IMR-90 (cell line): ENCODE measurements at regions of chr11 and their contacts with region 1.

Region 1: DNA sequence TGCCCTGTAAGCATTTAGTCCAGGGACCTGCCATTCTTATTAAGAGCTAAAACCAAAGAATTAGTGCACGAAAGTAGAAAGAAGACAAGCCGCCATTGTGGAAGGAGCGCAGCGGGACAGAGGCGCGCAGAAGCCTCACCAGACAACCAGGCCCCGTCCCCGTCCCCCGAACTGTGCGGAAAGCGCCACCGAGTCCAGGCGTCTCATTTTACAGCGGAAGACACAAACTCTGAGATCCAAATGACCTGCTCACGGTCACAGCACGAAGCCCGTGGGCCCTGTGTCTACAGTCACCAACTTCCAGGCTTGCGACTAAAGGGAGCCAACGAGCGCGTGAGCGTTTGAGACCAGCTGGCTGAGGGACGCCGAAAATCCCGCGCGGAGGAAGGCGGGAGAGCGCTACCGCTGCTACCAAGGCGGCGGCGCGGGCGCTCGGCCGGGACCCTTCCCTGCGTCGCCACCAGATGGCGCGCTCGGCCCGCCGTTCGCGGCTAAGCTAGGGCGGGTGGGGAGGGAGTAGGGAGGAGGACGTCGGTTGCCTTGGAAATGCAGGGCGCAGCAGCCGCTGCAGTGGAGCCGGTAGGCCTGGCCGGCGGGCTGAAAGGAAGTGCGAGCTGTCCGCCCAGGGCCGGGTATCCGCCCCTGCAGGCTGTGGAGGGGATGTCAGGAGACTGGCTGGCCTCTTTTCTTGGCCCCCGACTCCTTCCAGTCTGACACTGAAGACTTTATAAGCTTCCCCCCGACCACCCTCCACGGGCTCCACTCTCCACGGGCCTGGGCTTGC is 434 bp upstream of the CCDC83 start:
- DNase-seq: peak; percentile 90
- ATAC-seq: peak; percentile 99
- H3K4me3 ChIP-seq: peak overlapping the region; percentile 90
- H3K27ac ChIP-seq: peak overlapping the region; percentile 98
- H3K4me1 ChIP-seq: peaks cover 7% of the 10 kb centered on the region
- H3K27me3 ChIP-seq: no peaks in the 10 kb centered on the region
- CTCF ChIP-seq: peak; percentile 82
- POLR2A ChIP-seq: peak; percentile 69
- RAD21 ChIP-seq: peak; percentile 93

Region 2: GRCh38 chr11:85385547-85385946 is 469.2 kb before region 1 on chr11:
- CTCF ChIA-PET with region 1: no interaction called
- POLR2A ChIA-PET with region 1: no interaction called
- dilution Hi-C with region 1: no loop called
- in situ Hi-C with region 1: no loop called
- intact Hi-C with region 1: no loop called
- DNase-seq: no peak
- ATAC-seq: no peak
- H3K4me3 ChIP-seq: no peak overlapping the region
- H3K27ac ChIP-seq: no peak overlapping the region
- H3K4me1 ChIP-seq: no peaks in the 10 kb centered on the region
- H3K27me3 ChIP-seq: no peaks in the 10 kb centered on the region
- CTCF ChIP-seq: no peak
- POLR2A ChIP-seq: no peak
- RAD21 ChIP-seq: no peak

Region 3: GRCh38 chr11:85664615-85665481 is 189.9 kb before region 1 on chr11 and contains the start of gene CREBZF:
- CTCF ChIA-PET with region 1: no interaction called
- POLR2A ChIA-PET with region 1: no interaction called
- dilution Hi-C with region 1: no loop called
- in situ Hi-C with region 1: no loop called
- intact Hi-C with region 1: loop called (anchors 1 kb)
- DNase-seq: peak; percentile 95
- ATAC-seq: peak; percentile 92
- H3K4me3 ChIP-seq: peak within 1 kb of the TSS; percentile 96
- H3K27ac ChIP-seq: peak within 1 kb of the TSS; percentile 85
- H3K4me1 ChIP-seq: no peaks in the 10 kb centered on the region; the same call in 1 of the 2 replicates
- H3K27me3 ChIP-seq: no peaks in the 10 kb centered on the region
- CTCF ChIP-seq: no peak
- POLR2A ChIP-seq: peak; percentile 94
- RAD21 ChIP-seq: no peak
- total RNA-seq, gene CREBZF: 12.5 and 24.4 TPM in 2 replicates

Region 4: DNA sequence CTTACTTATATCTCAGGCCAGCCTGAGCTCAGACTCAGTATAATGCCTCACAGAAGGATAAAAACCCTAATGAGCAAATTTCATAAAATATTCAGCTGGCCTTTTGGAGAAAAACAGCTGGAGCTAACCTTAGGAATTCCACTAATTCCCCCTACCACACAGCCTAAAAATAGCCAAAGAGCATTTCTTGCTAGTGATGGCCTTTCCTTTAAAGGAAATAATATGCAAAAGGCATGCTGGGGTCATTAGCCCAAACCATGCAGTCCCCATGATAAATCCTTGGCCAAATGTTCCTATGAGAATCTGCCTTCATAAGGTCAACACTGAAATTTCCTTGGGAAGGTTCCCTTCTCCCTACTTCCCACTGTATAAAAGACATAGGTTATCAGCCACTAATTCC is 82.1 kb before region 1 on chr11:
- CTCF ChIA-PET with region 1: no interaction called
- POLR2A ChIA-PET with region 1: no interaction called
- dilution Hi-C with region 1: no loop called
- in situ Hi-C with region 1: no loop called
- intact Hi-C with region 1: no loop called
- DNase-seq: peak; percentile 87
- ATAC-seq: peak; percentile 65
- H3K4me3 ChIP-seq: no peak overlapping the region
- H3K27ac ChIP-seq: peak overlapping the region; percentile 98
- H3K4me1 ChIP-seq: peaks cover 16% of the 10 kb centered on the region
- H3K27me3 ChIP-seq: no peaks in the 10 kb centered on the region
- CTCF ChIP-seq: no peak
- POLR2A ChIP-seq: no peak
- RAD21 ChIP-seq: no peak

Region 5: DNA sequence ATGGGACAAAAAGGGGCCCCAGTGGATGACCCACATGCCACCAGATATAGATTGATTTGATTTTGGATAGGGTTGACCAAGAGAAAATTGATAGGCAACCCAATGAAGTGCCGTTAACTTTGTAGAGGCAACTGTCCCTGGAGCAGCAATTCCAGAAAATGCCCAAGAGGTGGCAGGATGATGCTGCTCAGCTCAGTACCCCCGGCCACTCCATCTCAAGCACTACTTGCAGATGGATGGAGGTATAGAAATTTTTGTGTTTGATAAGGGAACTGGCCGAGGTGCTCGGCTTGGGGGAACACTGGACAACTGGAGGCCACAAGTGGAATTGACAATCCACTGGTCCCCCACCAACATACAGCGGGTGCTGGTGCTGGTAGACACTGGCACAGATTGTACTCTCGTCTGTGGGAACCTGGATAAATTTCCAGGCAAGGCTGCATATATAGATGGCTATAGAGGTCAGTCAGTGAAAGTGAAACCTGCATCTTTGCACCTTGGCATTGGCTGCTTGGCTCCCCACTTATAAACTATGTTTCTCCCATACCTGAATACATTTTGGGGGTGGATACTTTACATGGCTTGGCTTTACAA is 86.7 kb after region 1 on chr11:
- CTCF ChIA-PET with region 1: interaction called, 7 read pairs
- POLR2A ChIA-PET with region 1: no interaction called
- dilution Hi-C with region 1: no loop called
- in situ Hi-C with region 1: no loop called
- intact Hi-C with region 1: loop called (anchors 2 kb)
- DNase-seq: peak; percentile 74
- ATAC-seq: peak; percentile 93
- H3K4me3 ChIP-seq: no peak overlapping the region
- H3K27ac ChIP-seq: no peak overlapping the region
- H3K4me1 ChIP-seq: peaks cover 5% of the 10 kb centered on the region; the same call in 1 of the 2 replicates
- H3K27me3 ChIP-seq: no peaks in the 10 kb centered on the region
- CTCF ChIP-seq: peak; percentile 74
- POLR2A ChIP-seq: no peak
- RAD21 ChIP-seq: peak; percentile 81

Region 6: DNA sequence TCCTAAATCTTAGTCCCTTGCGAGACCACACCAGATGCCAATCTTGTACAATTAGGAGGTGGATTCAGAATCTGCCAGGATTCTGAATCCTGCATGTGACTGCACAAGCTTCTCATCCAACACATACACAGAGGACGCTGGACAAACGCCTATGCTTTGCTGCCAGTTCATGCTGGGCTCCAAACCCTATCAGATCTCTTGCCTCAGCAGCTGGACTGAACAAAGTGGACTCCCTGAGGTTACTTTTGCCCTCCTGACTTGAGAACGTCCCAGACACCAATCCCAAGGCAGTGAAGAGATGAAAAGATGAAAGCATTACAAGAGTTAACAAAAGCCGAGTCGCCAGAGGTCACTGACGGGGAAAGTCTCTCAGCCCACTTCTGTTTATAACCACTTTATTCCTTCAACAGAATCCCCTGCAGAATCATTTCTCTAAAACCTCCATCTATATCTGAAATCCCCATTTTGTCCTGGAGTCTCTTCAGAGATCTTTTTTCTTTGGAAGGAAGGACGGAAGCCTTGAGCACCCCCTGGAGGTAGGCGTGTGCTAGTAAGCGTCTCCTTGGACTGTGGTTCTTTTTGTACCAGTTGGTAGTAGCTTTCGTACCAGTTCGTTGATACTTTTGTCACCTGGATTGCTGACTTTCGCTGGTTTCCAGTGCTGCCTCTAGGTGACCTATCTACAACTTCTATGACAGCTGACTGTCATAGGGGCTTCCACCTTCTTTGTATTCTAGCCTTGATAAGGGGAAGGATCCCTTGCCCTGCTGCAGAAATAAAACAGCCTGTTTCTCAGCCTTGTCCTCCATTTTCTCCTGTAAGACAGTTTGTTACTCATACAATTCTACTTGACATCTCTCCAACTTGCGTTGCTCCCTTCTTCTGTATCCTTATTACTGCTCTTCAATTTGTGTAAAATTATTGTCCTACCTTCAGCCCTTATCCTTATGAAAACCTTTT is 363.7 kb after region 1 on chr11:
- CTCF ChIA-PET with region 1: interaction called, 4 read pairs
- POLR2A ChIA-PET with region 1: no interaction called
- dilution Hi-C with region 1: no loop called
- in situ Hi-C with region 1: no loop called
- intact Hi-C with region 1: loop called (anchors 2 kb)
- DNase-seq: peak; percentile 76
- ATAC-seq: peak; percentile 100
- H3K4me3 ChIP-seq: peak overlapping the region; percentile 27; the same call in 1 of the 2 replicates
- H3K27ac ChIP-seq: no peak overlapping the region
- H3K4me1 ChIP-seq: no peaks in the 10 kb centered on the region; the same call in 1 of the 2 replicates
- H3K27me3 ChIP-seq: peaks cover 6% of the 10 kb centered on the region; the same call in 1 of the 2 replicates
- CTCF ChIP-seq: peak; percentile 91
- POLR2A ChIP-seq: peak; percentile 9; the same call in 1 of the 2 replicates
- RAD21 ChIP-seq: peak; percentile 91

Region 7: GRCh38 chr11:86291466-86292262 is 436.9 kb after region 1 on chr11:
- CTCF ChIA-PET with region 1: interaction called, 3 read pairs
- POLR2A ChIA-PET with region 1: no interaction called
- dilution Hi-C with region 1: no loop called
- in situ Hi-C with region 1: no loop called
- intact Hi-C with region 1: loop called (anchors 1 kb)
- DNase-seq: peak; percentile 55
- ATAC-seq: peak; percentile 71; the same call in 1 of the 2 replicates
- H3K4me3 ChIP-seq: no peak overlapping the region
- H3K27ac ChIP-seq: no peak overlapping the region
- H3K4me1 ChIP-seq: peaks cover 2% of the 10 kb centered on the region; the same call in 1 of the 2 replicates
- H3K27me3 ChIP-seq: peaks cover 2% of the 10 kb centered on the region; the same call in 1 of the 2 replicates
- CTCF ChIP-seq: peak; percentile 69
- POLR2A ChIP-seq: no peak
- RAD21 ChIP-seq: peak; percentile 81

Region 8: DNA sequence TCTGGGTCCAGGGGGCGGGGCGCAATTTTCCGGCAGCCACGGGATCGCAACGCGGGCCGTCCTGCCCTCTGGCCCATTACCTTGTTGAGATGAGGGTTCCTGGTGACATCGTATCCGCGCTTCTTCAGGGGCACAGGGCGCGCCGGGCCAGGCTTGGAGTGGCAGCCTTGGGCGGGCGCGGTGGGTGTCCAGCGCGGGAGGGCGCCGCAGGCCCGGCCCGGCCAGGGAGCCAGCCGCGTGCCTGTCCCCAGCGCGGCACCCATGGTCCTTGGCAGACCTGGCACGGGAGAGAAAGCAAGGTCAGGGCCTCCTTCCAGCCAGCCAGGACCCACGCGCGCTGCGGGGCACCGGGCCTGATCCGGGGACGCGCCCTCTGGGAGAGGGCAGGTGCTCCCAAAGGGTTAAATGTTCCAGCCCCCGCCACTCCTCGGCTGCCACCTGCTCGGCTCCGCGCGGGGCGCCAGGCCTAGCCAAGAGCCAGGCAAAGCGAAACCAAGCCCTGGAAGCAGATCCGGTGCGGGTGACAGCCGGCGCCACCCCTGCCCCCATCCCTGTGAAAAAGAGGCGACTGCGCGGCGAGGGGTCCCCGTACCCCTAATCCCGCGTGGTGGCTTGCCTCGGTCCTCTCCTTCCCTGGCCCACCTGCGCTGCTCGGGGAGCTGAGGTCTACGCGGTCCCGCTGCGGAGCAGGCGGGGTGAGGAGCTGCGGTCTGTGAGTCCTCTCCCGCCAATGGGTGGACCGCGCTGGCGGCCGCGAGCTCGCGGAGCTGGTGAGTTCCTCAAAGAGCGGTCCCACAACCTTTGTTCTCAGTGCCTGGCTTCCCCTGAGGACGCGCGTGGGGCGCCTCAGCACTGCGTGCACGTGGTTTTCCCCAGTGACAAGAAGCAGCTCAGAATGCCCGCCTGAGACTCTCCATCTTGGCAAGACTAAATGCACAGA is 817.2 kb after region 1 on chr11 and contains the start of gene ME3:
- CTCF ChIA-PET with region 1: no interaction called
- POLR2A ChIA-PET with region 1: no interaction called
- dilution Hi-C with region 1: no loop called
- in situ Hi-C with region 1: no loop called
- intact Hi-C with region 1: no loop called
- DNase-seq: peak; percentile 44
- ATAC-seq: peak; percentile 83
- H3K4me3 ChIP-seq: peak within 1 kb of the TSS; percentile 64
- H3K27ac ChIP-seq: peak within 1 kb of the TSS; percentile 18; the same call in 1 of the 2 replicates
- H3K4me1 ChIP-seq: 0 out of 2 replicates have a peak, but pooled peaks cover 2% of the 10 kb centered on the region
- H3K27me3 ChIP-seq: no peaks in the 10 kb centered on the region
- CTCF ChIP-seq: no peak
- POLR2A ChIP-seq: no peak
- RAD21 ChIP-seq: 0 out of 2 replicates have a peak, but pooled peaks have one; percentile 3
- total RNA-seq, gene ME3: 9.0 and 9.2 TPM in 2 replicates